CD8-positive, alpha-beta T cell (primary cell): ENCODE measurements at regions of chr1 and their contacts with region 1.

Region 1: GRCh38 chr1:235513495-235514366 is 9.5 kb upstream of the B3GALNT2 start:
- DNase-seq: peak in 5 of 9 experiments; percentile 14 to 77 (median 54)
- ATAC-seq: peak; percentile 55
- H3K4me3 ChIP-seq: no peak overlapping the region
- H3K4me3 Mint-ChIP-seq: no peak overlapping the region
- H3K27ac ChIP-seq: no peak overlapping the region
- H3K27ac Mint-ChIP-seq: no peak overlapping the region
- H3K4me1 ChIP-seq: no peaks in the 10 kb centered on the region
- H3K4me1 Mint-ChIP-seq: no peaks in the 10 kb centered on the region
- H3K27me3 ChIP-seq: no peaks in the 10 kb centered on the region
- H3K27me3 Mint-ChIP-seq: peaks cover 13% of the 10 kb centered on the region
- CTCF ChIP-seq: peak; percentile 94

Region 2: DNA sequence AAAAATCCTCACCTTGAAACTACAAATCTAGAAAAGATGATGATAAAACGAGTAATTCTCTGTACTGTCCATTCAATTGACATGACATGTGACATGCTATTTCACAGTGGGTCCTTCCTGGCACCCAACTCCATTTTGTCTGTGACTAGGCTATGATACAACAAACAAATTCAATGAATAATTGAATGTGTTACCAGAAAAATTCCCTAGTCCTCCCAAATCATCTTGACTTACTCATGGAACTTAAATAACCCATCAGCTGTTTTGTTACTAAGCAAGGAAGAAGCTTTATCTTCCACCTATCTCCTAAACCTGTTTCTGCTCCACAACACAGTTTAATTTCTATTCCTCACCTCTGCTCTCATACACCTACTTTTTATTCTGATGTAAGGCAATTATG is 39.9 kb before region 1 on chr1:
- CTCF ChIA-PET with region 1: no interaction called
- POLR2A ChIA-PET with region 1: no interaction called
- intact Hi-C with region 1: no loop called
- DNase-seq: no peak
- ATAC-seq: no peak
- H3K4me3 ChIP-seq: no peak overlapping the region
- H3K4me3 Mint-ChIP-seq: no peak overlapping the region
- H3K27ac ChIP-seq: no peak overlapping the region
- H3K27ac Mint-ChIP-seq: no peak overlapping the region
- H3K4me1 ChIP-seq: no peaks in the 10 kb centered on the region
- H3K4me1 Mint-ChIP-seq: no peaks in the 10 kb centered on the region
- H3K27me3 ChIP-seq: no peaks in the 10 kb centered on the region
- H3K27me3 Mint-ChIP-seq: no peaks in the 10 kb centered on the region
- CTCF ChIP-seq: no peak

Region 3: DNA sequence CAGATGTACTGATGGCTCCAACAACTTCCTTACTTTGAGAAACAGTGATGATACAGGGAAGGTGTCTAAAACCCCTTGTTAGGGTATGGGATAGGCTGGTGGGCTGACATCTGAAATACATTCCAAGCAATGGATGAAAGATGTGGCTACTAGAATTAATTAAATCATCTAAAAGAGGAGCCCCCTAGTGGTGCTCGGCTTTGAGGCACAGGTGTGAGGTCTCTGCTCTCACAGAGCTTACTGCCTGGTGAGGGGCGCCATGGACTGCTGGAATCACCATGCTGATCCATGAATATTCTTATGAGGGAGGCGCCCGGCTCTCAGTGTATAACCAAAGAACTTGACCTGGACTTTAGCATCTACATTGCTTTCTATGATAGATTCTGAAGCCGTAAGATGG is 87.4 kb after region 1 on chr1:
- CTCF ChIA-PET with region 1: interaction called, 8 read pairs
- POLR2A ChIA-PET with region 1: interaction called, 3 read pairs
- intact Hi-C with region 1: loop called in 1 of 2 experiments (anchors 5 kb)
- DNase-seq: peak in 3 of 9 experiments; percentile 12 to 28 (median 19)
- ATAC-seq: no peak
- H3K4me3 ChIP-seq: no peak overlapping the region
- H3K4me3 Mint-ChIP-seq: no peak overlapping the region
- H3K27ac ChIP-seq: no peak overlapping the region
- H3K27ac Mint-ChIP-seq: no peak overlapping the region
- H3K4me1 ChIP-seq: no peaks in the 10 kb centered on the region
- H3K4me1 Mint-ChIP-seq: no peaks in the 10 kb centered on the region
- H3K27me3 ChIP-seq: no peaks in the 10 kb centered on the region
- H3K27me3 Mint-ChIP-seq: no peaks in the 10 kb centered on the region
- CTCF ChIP-seq: peak; percentile 9

Region 4: GRCh38 chr1:235739124-235739523 is 225.4 kb after region 1 on chr1:
- CTCF ChIA-PET with region 1: interaction called, 3 read pairs
- POLR2A ChIA-PET with region 1: no interaction called
- intact Hi-C with region 1: loop called in 1 of 2 experiments (anchors 5 kb)
- DNase-seq: no peak
- ATAC-seq: no peak
- H3K4me3 ChIP-seq: no peak overlapping the region
- H3K4me3 Mint-ChIP-seq: no peak overlapping the region
- H3K27ac ChIP-seq: no peak overlapping the region
- H3K27ac Mint-ChIP-seq: no peak overlapping the region
- H3K4me1 ChIP-seq: no peaks in the 10 kb centered on the region
- H3K4me1 Mint-ChIP-seq: peaks cover 2% of the 10 kb centered on the region
- H3K27me3 ChIP-seq: no peaks in the 10 kb centered on the region
- H3K27me3 Mint-ChIP-seq: no peaks in the 10 kb centered on the region
- CTCF ChIP-seq: no peak